H1 (cell line): ENCODE measurements at regions of chr12 and their contacts with region 1.

Region 1: DNA sequence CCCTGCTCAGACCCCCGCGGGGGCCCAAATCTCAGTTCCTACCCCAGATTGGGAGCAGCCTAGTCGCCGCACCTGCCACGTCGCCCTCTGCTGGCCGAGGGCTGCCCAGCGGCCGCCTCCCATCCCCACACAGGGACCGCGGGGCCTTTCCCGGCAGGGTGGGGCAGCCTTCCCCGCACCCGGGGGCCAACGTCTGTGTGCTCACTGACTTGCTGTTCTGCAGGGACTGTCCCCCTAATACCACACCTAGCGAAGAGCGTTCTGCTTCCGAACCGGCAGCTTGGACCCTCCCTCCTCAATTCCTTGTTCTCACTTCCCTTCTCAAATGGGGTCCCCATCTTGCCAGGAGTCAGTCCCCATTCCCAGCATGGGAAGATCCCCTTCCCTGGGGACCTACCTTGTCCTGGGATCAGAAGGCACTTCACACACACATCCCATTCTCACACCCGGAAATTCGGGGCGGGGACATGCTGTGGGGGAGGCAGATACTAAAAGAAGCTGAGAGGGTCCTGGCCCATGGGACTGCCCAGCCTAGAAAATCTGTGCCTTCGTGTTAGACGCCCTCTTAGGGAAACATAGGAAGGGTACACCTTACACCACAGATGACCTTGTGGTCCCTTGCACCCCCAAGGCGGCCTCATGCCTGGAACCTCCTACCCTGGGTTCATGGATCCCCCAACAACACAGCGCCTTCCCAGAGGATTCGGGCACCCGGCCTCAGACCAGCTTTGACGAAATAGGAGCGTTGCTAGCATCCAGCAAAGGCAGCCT is 16.4 kb downstream of the ACVRL1 start:
- DNase-seq: peak in 1 of 2 experiments; percentile 93
- H3K4me3 ChIP-seq: peak overlapping the region in 2 of 4 experiments; percentile 3 to 42; a peak in 2 of 8 replicates
- H3K27ac ChIP-seq: no peak overlapping the region
- H3K4me1 ChIP-seq: peaks cover 2 to 12% (median 7%) of the 10 kb centered on the region in 4 experiments
- H3K27me3 ChIP-seq: peaks cover 0 to 8% (median 5%) of the 10 kb centered on the region in 4 experiments; a peak in 4 of 7 replicates
- CTCF ChIP-seq: peak; percentile 87 to 95 (median 92)
- EP300 ChIP-seq: no peak
- POLR2A ChIP-seq: no peak
- RAD21 ChIP-seq: peak; percentile 44 to 71

Region 2: DNA sequence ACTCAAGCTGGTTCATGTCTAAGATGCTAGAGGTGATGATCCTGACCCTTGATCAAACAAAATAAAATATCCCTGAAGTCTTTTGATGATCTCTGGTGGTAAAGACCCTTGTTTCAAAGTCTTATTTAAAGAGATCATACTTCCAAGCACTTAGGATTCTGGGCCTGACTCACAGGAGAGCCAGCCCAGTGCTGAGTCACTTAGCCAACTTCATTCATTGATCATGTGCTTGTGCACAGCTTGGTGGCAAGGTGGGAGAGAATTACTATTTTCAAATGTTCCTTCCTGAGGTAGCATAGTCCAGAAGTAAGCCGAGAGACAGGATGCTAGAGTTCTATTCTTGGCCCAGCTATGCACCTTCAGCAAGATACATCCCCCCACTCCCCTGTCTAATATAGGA is 292.1 kb before region 1 on chr12:
- CTCF ChIA-PET with region 1: no interaction called
- POLR2A ChIA-PET with region 1: no interaction called
- DNase-seq: no peak
- H3K4me3 ChIP-seq: no peak overlapping the region
- H3K27ac ChIP-seq: no peak overlapping the region
- H3K4me1 ChIP-seq: peaks cover 0 to 9% (median 0%) of the 10 kb centered on the region in 4 experiments; a peak in 3 of 7 replicates
- H3K27me3 ChIP-seq: peaks cover 0 to 1% (median 0%) of the 10 kb centered on the region in 4 experiments; a peak in 1 of 7 replicates
- CTCF ChIP-seq: no peak
- EP300 ChIP-seq: no peak
- POLR2A ChIP-seq: no peak
- RAD21 ChIP-seq: no peak

Region 3: GRCh38 chr12:51886021-51886322 is 37.7 kb before region 1 on chr12:
- CTCF ChIA-PET with region 1: interaction called, 34 read pairs
- POLR2A ChIA-PET with region 1: no interaction called
- DNase-seq: no peak
- H3K4me3 ChIP-seq: no peak overlapping the region
- H3K27ac ChIP-seq: no peak overlapping the region
- H3K4me1 ChIP-seq: peaks cover 0 to 12% (median 5%) of the 10 kb centered on the region in 4 experiments; a peak in 6 of 7 replicates
- H3K27me3 ChIP-seq: peaks cover 0 to 10% (median 6%) of the 10 kb centered on the region in 4 experiments; a peak in 3 of 7 replicates
- CTCF ChIP-seq: no peak
- EP300 ChIP-seq: no peak
- POLR2A ChIP-seq: no peak
- RAD21 ChIP-seq: no peak

Region 4: DNA sequence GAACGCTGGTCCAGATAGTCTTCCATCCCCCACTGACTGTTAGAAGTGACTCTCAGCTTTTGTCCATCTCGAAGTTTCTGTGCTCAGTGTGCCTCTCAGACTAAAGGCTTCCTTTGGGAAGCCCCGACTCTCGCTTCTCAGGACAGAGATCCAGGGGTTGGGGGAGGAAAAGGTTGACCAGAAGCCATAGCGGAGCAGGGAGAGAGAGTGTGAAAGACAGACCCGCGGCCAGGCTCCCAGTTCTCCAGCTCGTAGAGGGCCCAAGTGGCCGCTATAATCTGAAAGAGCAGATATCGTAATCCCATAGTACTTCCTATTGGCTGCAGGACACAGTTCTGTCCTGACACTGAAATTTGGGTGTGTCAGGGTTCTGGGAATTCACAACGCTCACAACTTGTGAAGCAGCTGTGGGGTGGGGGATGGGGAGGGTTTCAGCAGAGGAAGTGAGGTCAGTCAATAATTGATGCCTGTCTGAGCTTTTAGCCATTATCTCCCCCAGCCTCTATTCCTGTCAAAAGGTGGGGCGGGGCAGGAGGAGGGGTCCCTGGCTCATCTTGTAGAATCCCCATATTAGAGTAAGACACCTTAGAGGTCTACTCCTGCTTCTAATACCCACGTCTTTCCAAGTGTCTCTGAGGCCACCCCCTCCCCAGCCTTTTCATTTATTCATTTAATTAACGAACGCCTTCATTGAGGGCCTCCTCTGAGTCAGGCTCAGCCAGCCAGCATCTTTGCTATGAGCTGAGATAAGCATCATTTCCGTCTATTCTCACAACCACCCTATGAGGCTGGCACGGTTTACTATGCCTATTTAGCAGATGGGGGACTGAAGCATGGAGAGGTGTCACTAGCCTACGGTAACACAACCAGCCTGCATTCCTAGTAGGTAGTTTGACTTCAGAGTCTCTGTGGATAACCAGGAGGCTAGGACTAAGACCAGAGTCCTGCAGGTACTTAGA is 17.9 kb before region 1 on chr12:
- CTCF ChIA-PET with region 1: interaction called, 234 read pairs
- POLR2A ChIA-PET with region 1: no interaction called
- DNase-seq: no peak
- H3K4me3 ChIP-seq: no peak overlapping the region
- H3K27ac ChIP-seq: no peak overlapping the region
- H3K4me1 ChIP-seq: no peaks in the 10 kb centered on the region
- H3K27me3 ChIP-seq: peaks cover 4 to 25% (median 20%) of the 10 kb centered on the region in 4 experiments
- CTCF ChIP-seq: no peak
- EP300 ChIP-seq: no peak
- POLR2A ChIP-seq: no peak
- RAD21 ChIP-seq: no peak

Region 5: GRCh38 chr12:51951199-51951842 is 27.6 kb after region 1 on chr12 and contains the start of gene ACVR1B:
- CTCF ChIA-PET with region 1: interaction called, 15 read pairs
- POLR2A ChIA-PET with region 1: interaction called, 4 read pairs
- DNase-seq: peak in 1 of 2 experiments; percentile 87
- H3K4me3 ChIP-seq: peak within 1 kb of the TSS; percentile 73 to 95 (median 90)
- H3K27ac ChIP-seq: peak within 1 kb of the TSS; percentile 52; the same call in 1 of the 2 replicates
- H3K4me1 ChIP-seq: peaks cover 0 to 3% (median 2%) of the 10 kb centered on the region in 4 experiments; a peak in 6 of 7 replicates
- H3K27me3 ChIP-seq: peaks cover 7 to 47% (median 34%) of the 10 kb centered on the region in 4 experiments
- CTCF ChIP-seq: no peak
- EP300 ChIP-seq: no peak
- POLR2A ChIP-seq: peak in 1 of 2 experiments; percentile 1; a peak in 1 of 3 replicates
- RAD21 ChIP-seq: no peak
- total RNA-seq, gene ACVR1B: 13.5 and 16.0 TPM in 2 replicates

Region 6: DNA sequence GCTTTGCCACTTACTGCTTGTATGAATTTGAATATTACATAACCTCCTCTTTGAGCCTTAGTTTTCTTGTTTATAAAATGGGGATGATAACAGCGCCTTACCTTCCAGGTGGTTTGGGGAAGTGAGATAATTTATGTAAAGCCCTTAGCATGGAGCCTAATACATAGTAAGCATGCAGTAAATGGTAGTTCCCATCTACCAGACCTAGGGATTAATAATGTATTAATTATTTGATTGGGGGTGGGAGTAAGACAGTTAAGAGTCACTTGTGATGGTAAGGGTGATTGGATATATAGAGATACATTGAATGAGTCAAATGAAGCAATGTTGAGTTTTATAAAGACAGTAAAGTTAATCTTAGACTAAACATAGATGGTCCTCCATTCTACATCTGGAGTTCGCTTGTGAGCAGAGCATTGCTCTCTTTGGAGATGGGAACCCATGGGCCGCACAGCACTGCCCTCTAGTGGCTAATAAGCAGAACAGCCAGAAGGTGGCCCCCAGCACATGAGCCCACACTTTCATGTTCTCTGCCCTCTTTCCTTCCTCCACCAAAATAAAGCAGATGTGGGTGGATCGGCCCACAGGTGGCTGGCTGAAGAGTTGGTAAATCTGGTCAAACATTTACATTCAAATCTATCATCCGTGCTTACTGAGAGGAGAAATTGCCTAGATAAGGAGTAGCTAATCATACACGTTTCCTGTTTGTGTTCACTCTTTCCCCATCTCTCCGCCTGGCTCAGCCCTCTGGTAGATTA is 56.5 kb after region 1 on chr12:
- CTCF ChIA-PET with region 1: interaction called, 13 read pairs
- POLR2A ChIA-PET with region 1: no interaction called
- DNase-seq: peak in 1 of 2 experiments; percentile 66
- H3K4me3 ChIP-seq: no peak overlapping the region
- H3K27ac ChIP-seq: no peak overlapping the region
- H3K4me1 ChIP-seq: peaks cover 0 to 1% (median 0%) of the 10 kb centered on the region in 4 experiments; a peak in 1 of 7 replicates
- H3K27me3 ChIP-seq: no peaks in the 10 kb centered on the region
- CTCF ChIP-seq: peak; percentile 94 to 97 (median 96)
- EP300 ChIP-seq: no peak
- POLR2A ChIP-seq: no peak
- RAD21 ChIP-seq: peak; percentile 83 to 88

Region 7: DNA sequence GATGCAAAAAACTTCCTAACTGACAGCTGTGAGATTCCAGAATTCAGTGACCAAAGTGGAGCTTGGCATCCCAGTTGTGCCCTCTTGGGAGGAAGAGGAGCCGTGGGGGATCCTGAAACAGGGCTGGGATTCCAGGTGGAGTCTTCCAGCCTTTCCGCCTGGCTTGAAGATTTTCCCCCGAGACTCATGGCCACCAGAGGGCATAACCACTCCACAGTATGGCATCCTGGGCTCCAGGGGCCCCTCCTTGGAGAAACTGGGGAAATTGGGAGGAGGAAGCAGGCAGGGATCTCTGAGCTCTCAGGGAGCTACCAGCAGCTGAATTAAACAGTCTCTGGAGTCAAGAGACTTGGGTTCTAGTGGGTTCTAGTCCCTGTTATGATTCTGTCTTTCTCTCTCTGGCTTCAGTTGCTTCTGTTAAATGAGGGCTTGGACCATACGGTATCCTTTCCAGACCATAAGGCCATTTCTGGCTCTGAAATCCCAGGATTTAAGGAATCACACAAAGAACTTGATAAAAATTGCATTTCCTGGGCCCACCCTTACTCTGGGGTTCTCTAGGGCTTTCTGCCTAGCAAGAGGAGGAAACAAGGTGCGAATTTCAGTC is 80.5 kb after region 1 on chr12:
- CTCF ChIA-PET with region 1: interaction called, 20 read pairs
- POLR2A ChIA-PET with region 1: no interaction called
- DNase-seq: peak in 1 of 2 experiments; percentile 81
- H3K4me3 ChIP-seq: no peak overlapping the region
- H3K27ac ChIP-seq: no peak overlapping the region
- H3K4me1 ChIP-seq: peaks cover 0 to 16% (median 8%) of the 10 kb centered on the region in 4 experiments; a peak in 6 of 7 replicates
- H3K27me3 ChIP-seq: peaks cover 19 to 47% (median 44%) of the 10 kb centered on the region in 4 experiments
- CTCF ChIP-seq: peak in 2 of 3 experiments; percentile 83 to 93; a peak in 3 of 4 replicates
- EP300 ChIP-seq: no peak
- POLR2A ChIP-seq: no peak
- RAD21 ChIP-seq: peak; percentile 91 to 95